Esophagus muscularis mucosa (tissue), 4 donors: ENCODE measurements at regions of chr16 and their contacts with region 1.

Region 1: DNA sequence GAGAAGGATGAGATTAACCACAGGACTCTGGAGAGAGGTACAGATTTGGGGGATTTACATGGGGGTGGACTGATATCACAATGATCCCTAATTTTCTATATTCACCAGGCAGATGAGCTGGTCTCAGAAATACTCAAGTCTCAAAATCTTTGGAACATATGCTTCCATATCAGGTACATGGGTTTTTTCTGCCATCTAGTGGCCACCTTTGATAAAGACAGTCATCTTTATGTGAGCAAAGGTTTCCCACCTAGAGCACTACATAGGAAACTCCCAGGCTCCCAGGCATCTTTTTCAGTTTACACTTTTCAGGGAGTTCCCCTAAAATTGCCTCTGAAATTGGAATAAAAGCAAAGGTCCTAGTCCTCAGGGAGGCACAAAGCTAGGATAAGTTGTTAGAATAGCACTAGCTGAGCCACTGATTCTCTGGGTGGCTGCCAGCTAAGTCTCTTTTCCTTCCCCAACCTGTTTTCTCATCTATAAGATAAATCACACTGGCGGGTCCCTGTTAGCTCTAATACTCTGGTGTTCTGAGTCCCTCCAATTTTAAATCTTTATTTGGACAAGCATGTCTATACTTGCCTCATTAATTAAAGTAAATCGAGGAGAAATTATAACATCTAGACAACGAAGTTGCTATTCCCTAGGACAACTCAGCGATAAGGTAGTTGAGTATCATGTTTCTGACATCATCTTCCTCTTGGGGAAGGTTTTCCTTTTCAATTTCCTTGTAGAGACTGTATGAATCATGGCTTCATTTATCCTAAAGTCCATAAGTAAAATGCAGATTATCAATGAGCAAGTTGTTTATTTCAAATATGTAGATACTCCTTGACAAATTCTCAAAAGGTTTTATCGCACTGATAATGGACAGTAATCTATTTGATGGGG is 19.0 kb upstream of the MON1B start:
- DNase-seq: no peak
- H3K4me3 ChIP-seq: no peak overlapping the region
- H3K27ac ChIP-seq: no peak overlapping the region
- H3K4me1 ChIP-seq: no peaks in the 10 kb centered on the region
- H3K27me3 ChIP-seq: peaks cover 0 to 23% (median 2%) of the 10 kb centered on the region in 4 donors
- CTCF ChIP-seq: peak; percentile 57 to 72 (median 61)
- EP300 ChIP-seq: no peak
- POLR2A ChIP-seq: no peak

Region 2: DNA sequence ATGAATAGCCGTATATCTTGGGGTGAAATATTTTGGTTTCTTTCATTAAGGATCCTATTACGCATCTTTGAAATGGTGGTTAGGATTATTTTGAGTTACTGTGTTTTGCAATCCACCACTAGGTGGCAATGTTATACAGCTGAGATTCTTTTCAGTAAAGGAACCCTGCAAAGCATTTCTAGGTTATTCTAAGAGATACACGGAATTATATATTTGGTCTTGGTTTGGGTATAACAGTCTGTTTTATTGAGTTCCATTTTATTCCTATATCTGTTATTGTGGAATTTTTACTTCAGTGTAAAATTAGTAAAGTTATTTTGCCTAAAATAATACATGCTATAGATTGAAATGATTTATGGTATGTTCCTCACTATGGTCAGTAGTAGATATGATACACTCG is 1382.8 kb before region 1 on chr16:
- intact Hi-C with region 1: loop called (anchors 5 kb)
- DNase-seq: no peak
- H3K4me3 ChIP-seq: no peak overlapping the region
- H3K27ac ChIP-seq: no peak overlapping the region
- H3K4me1 ChIP-seq: no peaks in the 10 kb centered on the region
- H3K27me3 ChIP-seq: peaks cover 0 to 14% (median 0%) of the 10 kb centered on the region in 4 donors
- CTCF ChIP-seq: peak; percentile 56 to 82 (median 76)
- EP300 ChIP-seq: no peak
- POLR2A ChIP-seq: no peak

Region 3: DNA sequence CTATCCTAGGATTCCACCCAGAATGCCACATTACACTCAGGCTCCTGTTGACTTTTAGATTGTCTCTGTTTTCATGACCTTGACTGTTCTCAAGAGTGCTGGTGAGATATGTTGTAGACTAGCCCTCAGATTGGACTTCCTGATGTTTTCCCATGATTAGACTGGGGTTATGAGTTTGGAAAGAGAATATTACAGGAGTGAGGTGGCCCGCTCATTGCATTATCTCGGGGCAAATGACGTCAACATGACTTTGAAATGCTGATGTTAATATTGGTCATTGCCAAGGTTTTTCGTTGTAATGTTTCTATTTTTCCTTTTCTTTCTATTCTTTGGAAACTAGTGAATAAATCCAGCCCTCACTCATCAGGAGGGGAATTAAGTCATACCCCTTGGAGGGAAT is 336.7 kb before region 1 on chr16:
- intact Hi-C with region 1: no loop called
- DNase-seq: no peak
- H3K4me3 ChIP-seq: no peak overlapping the region
- H3K27ac ChIP-seq: no peak overlapping the region
- H3K4me1 ChIP-seq: no peaks in the 10 kb centered on the region
- H3K27me3 ChIP-seq: no peaks in the 10 kb centered on the region
- CTCF ChIP-seq: no peak
- EP300 ChIP-seq: no peak
- POLR2A ChIP-seq: no peak

Region 4: DNA sequence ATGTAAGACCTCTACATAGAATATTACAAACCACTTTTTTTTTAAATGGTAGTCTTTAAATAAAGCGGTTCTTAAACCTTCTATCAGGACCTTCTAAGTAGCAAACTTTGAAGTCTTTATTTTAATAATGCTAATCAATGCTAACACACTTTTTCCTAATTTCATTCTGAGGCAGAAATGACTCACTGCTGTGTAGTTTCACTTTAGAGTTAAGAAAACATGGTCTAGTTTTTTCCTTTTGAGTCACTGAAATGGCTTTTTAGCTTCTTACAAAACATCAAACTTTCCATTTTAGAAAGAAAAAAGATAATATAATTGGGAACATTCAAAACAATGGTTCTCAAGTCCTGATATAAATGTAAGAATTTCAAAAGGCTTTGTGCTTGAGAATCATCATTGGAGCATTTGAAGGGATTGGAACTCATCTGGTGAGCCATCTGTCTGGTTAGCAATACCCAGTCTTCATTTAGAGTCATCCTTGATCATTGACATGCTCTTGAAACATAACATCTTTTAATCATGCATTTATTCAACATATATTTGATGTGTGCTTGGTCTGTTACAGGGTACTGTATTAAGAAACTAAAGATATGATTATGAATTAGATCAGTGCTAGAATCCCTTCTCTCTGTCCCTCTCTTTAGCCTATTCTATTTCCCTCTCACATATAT is 239.3 kb before region 1 on chr16:
- intact Hi-C with region 1: no loop called
- DNase-seq: no peak
- H3K4me3 ChIP-seq: no peak overlapping the region
- H3K27ac ChIP-seq: no peak overlapping the region
- H3K4me1 ChIP-seq: no peaks in the 10 kb centered on the region
- H3K27me3 ChIP-seq: no peaks in the 10 kb centered on the region
- CTCF ChIP-seq: no peak
- EP300 ChIP-seq: no peak
- POLR2A ChIP-seq: no peak